Calu3 (cell line): ENCODE measurements at regions of chr7 and their contacts with region 1.

Region 1: GRCh38 chr7:55206235-55207029 is 158.7 kb upstream of the LANCL2 start:
- DNase-seq: no peak
- H3K4me3 Mint-ChIP-seq: no peak overlapping the region
- H3K27ac Mint-ChIP-seq: no peak overlapping the region
- H3K4me1 Mint-ChIP-seq: no peaks in the 10 kb centered on the region
- H3K27me3 Mint-ChIP-seq: no peaks in the 10 kb centered on the region
- CTCF ChIP-seq: no peak

Region 2: GRCh38 chr7:55100544-55101301 is 105.7 kb before region 1 on chr7:
- CTCF ChIA-PET with region 1: no interaction called
- intact Hi-C with region 1: no loop called
- DNase-seq: no peak
- H3K4me3 Mint-ChIP-seq: no peak overlapping the region
- H3K27ac Mint-ChIP-seq: no peak overlapping the region
- H3K4me1 Mint-ChIP-seq: no peaks in the 10 kb centered on the region
- H3K27me3 Mint-ChIP-seq: no peaks in the 10 kb centered on the region
- CTCF ChIP-seq: no peak

Region 3: GRCh38 chr7:55140221-55140940 is 66.1 kb before region 1 on chr7:
- CTCF ChIA-PET with region 1: no interaction called
- intact Hi-C with region 1: loop called (anchors 10 kb)
- DNase-seq: no peak
- H3K4me3 Mint-ChIP-seq: no peak overlapping the region
- H3K27ac Mint-ChIP-seq: no peak overlapping the region
- H3K4me1 Mint-ChIP-seq: peaks cover 61% of the 10 kb centered on the region
- H3K27me3 Mint-ChIP-seq: no peaks in the 10 kb centered on the region
- CTCF ChIP-seq: no peak